ENCODE measurements at regions of chr1 and their contacts with region 1.

Region 1: DNA sequence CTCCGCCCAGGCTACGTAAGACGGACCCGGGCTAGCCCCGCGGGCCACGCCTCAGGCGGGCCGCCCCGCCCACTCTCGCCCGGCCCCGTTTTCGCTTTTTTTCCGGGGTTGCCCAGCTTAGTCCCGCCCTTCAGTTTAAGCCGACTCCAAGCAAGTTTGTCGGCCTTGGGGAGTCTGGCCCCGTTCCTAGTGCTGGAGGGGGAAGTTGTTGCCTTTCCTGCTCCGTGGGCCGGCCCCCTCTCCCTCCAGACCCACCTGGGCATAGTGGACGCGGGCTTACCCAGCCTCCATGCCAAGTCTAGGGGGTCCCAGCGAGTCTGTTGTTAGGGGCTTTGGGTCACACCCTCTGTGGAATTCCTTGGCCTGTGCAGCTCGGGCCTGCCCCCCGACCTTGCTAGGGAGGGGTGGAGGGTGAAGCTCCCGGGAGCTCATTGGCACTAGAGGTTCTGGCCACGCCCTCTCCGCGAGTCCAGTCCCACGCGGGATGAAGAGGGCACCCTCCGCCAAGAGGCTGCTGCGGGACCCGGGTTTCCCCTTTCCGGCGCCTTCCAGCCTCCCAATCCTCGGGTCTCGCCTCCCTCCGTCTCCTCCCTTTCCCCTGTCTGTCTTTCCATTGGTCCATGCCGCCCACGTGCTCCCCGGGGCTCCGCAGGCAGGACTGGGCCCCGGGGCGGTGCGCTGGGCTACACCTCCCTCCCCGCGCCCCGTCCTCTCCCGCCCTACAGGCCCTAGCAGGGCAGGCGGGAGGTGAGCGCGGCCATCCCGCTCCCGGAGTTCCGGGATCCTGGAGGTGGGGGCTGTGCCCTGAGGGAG is 3.3 kb downstream of the RUSC1 start:
- DNase-seq: peak; percentile 95
- ATAC-seq: peak; percentile 81
- H3K4me3 Mint-ChIP-seq: peak overlapping the region; percentile 76
- H3K27ac Mint-ChIP-seq: peak overlapping the region; percentile 45
- H3K4me1 Mint-ChIP-seq: peaks cover 40% of the 10 kb centered on the region
- H3K27me3 Mint-ChIP-seq: no peaks in the 10 kb centered on the region

Region 2: DNA sequence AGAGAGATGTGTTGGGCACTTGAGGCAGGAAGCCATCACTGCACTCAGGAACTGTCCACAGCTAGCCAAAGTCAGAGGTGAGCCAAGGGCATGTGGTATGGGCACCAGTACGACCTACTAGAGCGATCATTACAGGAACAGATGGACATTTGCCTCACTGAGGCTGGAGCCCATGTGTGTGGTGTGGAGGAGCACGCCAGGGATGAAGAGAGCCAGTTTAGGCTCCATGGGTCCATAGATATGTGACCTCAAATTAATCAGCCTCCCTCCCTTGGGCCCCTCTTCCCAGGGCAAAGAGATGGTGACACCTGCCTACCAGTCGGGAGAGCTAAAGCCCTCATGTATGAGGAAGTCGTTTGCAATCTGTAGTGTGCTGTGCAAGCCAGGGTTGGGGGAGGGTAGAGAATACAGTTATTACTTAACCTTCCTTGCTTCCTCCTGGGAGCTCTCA is 1979.4 kb before region 1 on chr1:
- CTCF ChIA-PET with region 1: no interaction called
- POLR2A ChIA-PET with region 1: no interaction called
- intact Hi-C with region 1: no loop called
- DNase-seq: no peak
- ATAC-seq: no peak
- H3K4me3 Mint-ChIP-seq: no peak overlapping the region
- H3K27ac Mint-ChIP-seq: no peak overlapping the region
- H3K4me1 Mint-ChIP-seq: peaks cover 40% of the 10 kb centered on the region
- H3K27me3 Mint-ChIP-seq: peaks cover 9% of the 10 kb centered on the region

Region 3: DNA sequence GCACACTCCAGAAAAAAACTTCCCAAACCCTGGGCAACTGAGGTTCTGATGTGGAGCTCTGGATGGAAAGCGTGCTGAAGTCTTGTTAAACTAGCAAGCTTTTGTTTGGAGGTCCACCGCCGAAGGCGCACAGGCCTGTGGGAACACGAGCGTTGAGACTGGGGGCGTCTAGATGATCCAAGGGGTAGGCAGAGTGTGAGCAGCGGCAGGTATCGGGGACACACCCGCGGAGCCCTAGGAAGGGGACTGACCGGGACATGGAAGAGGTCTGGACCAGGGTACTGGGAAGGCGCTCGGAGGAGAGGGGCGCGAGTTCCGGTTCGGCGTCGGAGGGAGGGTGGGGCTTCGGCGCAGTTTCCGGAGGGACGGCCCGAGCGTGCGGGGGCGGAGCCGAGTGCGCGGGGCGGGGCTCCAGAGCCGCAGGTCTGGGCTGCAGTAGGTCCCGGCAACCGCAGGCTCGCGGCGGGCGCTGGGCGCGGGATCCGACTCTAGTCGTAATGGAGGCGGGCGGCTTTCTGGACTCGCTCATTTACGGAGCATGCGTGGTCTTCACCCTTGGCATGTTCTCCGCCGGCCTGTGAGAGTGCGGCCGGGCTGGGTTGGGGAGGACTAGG is 188.5 kb before region 1 on chr1 and contains the start of gene SLC50A1:
- CTCF ChIA-PET with region 1: interaction called, 3 read pairs
- POLR2A ChIA-PET with region 1: no interaction called
- intact Hi-C with region 1: loop called in 1 of 2 experiments (anchors 5 kb)
- DNase-seq: peak; percentile 97
- ATAC-seq: peak; percentile 78
- H3K4me3 Mint-ChIP-seq: peak within 1 kb of the TSS; percentile 96
- H3K27ac Mint-ChIP-seq: peak within 1 kb of the TSS; percentile 97
- H3K4me1 Mint-ChIP-seq: peaks cover 35% of the 10 kb centered on the region
- H3K27me3 Mint-ChIP-seq: no peaks in the 10 kb centered on the region
- total RNA-seq, gene SLC50A1: 50.2 to 58.0 TPM

Region 4: DNA sequence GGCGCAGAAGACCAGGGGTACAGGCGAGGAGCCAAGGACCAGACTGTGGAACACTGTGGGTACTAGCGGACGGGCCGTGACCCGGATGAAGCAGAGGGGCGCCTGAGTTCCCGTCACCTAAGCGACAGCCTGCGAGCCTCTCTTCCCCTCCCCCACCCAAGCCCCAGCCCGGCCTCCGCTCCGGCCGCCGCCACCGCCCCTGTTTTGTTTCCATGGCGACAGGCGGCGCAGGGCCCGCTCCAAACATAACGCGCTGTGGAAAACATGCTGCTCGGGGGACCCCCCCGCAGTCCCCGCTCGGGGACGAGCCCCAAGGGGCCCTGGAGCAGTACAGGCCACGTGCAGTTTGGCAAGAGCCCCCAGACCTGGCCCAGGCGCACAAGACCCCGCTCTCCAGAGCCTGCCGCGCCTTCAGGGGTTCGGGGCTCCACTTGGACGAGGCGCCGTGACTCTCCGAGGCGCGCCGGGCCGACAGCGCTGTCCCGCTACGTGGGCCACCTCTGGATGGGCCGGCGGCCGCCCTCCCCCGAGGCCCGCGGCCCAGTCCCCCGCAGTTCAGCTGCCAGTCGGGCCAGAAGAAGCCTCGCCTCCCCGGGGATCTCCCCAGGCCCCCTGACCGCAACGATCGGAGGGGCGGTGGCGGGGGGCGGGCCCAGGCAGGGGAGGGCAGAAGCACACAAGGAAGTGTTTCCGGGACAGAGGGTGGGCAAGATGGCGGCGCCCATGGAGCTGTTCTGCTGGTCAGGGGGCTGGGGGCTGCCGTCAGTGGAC is 115.3 kb before region 1 on chr1 and contains the start of gene MTX1:
- CTCF ChIA-PET with region 1: interaction called, 9 read pairs
- POLR2A ChIA-PET with region 1: no interaction called
- intact Hi-C with region 1: loop called (anchors 1 to 5 kb)
- DNase-seq: peak; percentile 93
- ATAC-seq: peak; percentile 87
- H3K4me3 Mint-ChIP-seq: peak within 1 kb of the TSS; percentile 89
- H3K27ac Mint-ChIP-seq: peak within 1 kb of the TSS; percentile 86
- H3K4me1 Mint-ChIP-seq: peaks cover 29% of the 10 kb centered on the region
- H3K27me3 Mint-ChIP-seq: no peaks in the 10 kb centered on the region
- total RNA-seq, gene MTX1: 52.8 to 52.9 TPM

Region 5: DNA sequence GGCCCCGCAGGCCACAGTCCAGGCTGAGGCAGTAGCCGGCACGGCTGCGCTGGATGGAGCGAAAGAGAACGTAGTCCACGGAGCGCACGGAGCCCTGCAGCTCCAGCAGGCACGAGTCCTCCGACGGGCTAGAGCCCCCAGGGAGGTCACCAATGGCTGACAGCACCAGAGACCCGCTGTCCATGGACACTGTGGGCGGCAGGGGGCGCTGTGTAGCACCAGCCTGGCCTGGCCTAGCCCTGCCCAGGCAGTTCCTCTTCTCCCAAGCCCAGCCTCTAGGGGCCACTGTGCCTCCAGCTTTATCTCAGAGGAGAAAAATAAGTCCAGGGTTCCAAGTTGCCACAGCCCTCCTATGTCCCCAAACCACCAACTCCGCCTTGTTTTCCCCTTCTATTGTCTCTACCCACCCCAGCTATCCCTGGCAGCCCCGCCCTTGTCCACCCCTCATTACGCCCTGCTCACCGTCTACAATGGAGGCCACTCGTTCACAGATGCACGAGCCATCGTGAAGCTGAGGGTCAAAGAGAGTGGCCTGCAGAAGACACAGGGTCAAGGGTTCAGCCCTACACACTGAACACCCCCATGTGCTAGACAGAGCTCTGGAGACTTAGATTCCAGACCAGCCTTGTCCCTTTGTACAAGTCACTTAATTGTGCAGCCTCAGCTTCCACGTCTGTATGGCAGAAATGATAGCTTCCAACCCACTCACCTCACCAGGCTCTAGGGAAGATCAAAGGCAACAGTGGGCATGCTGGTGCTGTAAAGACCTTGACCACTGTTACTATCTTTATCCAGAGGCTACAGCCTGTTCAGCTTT is 73.2 kb before region 1 on chr1:
- CTCF ChIA-PET with region 1: interaction called, 79 read pairs
- POLR2A ChIA-PET with region 1: interaction called, 4 read pairs
- intact Hi-C with region 1: loop called (anchors 1 kb)
- DNase-seq: peak; percentile 99
- ATAC-seq: peak; percentile 96
- H3K4me3 Mint-ChIP-seq: peak overlapping the region; percentile 38
- H3K27ac Mint-ChIP-seq: peak overlapping the region; percentile 31
- H3K4me1 Mint-ChIP-seq: peaks cover 25% of the 10 kb centered on the region
- H3K27me3 Mint-ChIP-seq: no peaks in the 10 kb centered on the region

Region 6: DNA sequence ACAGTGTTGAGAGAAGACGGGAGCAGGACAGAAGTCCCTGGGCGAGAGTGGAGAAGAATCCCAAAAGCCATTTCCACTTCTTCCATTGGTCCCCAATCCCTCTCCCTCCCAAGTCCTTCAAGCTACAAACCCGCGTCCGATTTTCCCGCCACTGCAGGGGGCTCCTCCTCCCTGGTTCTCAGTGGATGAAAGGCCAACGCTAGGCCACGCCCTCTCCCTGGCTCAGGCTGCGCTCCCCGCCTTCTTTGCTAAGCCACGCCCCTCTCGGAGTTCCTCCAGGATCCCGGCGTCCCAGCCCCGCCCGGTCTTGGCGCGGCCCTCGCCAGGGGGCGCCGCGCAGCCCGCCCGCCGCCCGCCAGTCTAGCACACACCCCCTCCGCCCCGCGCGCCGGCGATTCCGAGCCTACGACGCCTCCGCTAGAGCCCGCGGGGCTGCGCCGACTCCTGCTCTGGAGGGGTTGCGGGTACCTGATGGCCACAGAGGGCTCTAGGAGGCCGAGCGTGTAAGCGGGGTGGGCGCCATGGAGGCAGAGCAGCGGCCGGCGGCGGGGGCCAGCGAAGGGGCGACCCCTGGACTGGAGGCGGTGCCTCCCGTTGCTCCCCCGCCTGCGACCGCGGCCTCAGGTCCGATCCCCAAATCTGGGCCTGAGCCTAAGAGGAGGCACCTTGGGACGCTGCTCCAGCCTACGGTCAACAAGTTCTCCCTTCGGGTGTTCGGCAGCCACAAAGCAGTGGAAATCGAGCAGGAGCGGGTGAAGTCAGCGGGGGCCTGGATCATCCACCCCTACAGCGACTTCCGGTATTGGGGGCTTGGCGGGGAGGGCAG is 46.7 kb before region 1 on chr1 and contains the start of gene HCN3:
- CTCF ChIA-PET with region 1: interaction called, 15 read pairs
- POLR2A ChIA-PET with region 1: interaction called, 3 read pairs
- intact Hi-C with region 1: loop called (anchors 1 kb)
- DNase-seq: peak; percentile 97
- ATAC-seq: peak; percentile 68
- H3K4me3 Mint-ChIP-seq: peak within 1 kb of the TSS; percentile 63
- H3K27ac Mint-ChIP-seq: no peak within 1 kb of the TSS
- H3K4me1 Mint-ChIP-seq: peaks cover 31% of the 10 kb centered on the region
- H3K27me3 Mint-ChIP-seq: no peaks in the 10 kb centered on the region
- total RNA-seq, gene HCN3: 1.9 to 2.3 TPM

Region 7: GRCh38 chr1:155591770-155592169 is 267.8 kb after region 1 on chr1:
- CTCF ChIA-PET with region 1: no interaction called
- POLR2A ChIA-PET with region 1: no interaction called
- intact Hi-C with region 1: loop called (anchors 5 to 10 kb)
- DNase-seq: peak; percentile 17
- ATAC-seq: peak; percentile 75
- H3K4me3 Mint-ChIP-seq: no peak overlapping the region
- H3K27ac Mint-ChIP-seq: no peak overlapping the region
- H3K4me1 Mint-ChIP-seq: no peaks in the 10 kb centered on the region
- H3K27me3 Mint-ChIP-seq: no peaks in the 10 kb centered on the region

Region 8: DNA sequence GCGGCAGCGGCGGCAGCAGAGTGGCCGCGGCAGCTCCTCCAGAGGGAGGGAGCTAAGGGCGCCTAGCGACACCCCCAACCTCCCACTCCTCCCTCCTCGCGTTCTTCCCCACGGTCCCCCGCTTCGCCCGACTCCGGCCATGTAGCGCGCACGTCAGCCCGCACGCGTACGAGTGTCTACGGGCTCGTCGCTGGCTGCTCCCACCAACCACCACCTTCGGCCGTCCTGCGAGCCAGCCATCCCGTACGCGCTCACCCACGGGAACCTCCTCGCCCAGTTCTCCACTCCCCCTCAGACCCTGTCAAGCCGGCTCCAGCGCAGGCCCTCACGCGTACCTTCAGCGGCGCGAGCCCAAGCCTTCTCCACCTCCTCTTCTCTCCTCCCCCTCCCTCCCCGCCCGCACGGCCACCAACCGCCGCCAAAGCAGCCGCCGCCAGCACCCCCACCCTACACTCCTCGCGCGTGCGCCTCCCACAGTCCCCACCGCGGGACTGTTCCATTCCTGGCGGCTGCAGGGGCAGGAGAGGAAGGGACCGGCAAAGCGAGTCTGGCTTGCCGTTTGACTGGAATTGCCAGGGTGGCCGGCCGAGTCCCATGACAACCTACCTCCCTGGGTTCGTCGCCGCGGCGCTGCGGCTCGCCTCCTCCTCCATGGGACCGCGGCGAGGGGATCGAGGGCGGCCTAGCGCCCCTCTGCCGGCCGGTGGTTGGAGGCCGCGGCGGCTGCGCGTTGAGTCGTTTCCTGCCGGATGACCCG is 364.5 kb after region 1 on chr1 and contains the start of gene YY1AP1:
- CTCF ChIA-PET with region 1: no interaction called
- POLR2A ChIA-PET with region 1: no interaction called
- intact Hi-C with region 1: loop called in 1 of 2 experiments (anchors 5 kb)
- DNase-seq: peak; percentile 95
- ATAC-seq: peak; percentile 86
- H3K4me3 Mint-ChIP-seq: peak within 1 kb of the TSS; percentile 97
- H3K27ac Mint-ChIP-seq: peak within 1 kb of the TSS; percentile 94
- H3K4me1 Mint-ChIP-seq: peaks cover 29% of the 10 kb centered on the region
- H3K27me3 Mint-ChIP-seq: no peaks in the 10 kb centered on the region
- total RNA-seq, gene YY1AP1: 59.6 to 76.0 TPM

Measured in activated CD4-positive, alpha-beta T cell treated with anti-CD3 and anti-CD28 coated beads for 36 hours (primary cell).